ENCODE measurements at regions of chr14 and their contacts with region 1.

Region 1: DNA sequence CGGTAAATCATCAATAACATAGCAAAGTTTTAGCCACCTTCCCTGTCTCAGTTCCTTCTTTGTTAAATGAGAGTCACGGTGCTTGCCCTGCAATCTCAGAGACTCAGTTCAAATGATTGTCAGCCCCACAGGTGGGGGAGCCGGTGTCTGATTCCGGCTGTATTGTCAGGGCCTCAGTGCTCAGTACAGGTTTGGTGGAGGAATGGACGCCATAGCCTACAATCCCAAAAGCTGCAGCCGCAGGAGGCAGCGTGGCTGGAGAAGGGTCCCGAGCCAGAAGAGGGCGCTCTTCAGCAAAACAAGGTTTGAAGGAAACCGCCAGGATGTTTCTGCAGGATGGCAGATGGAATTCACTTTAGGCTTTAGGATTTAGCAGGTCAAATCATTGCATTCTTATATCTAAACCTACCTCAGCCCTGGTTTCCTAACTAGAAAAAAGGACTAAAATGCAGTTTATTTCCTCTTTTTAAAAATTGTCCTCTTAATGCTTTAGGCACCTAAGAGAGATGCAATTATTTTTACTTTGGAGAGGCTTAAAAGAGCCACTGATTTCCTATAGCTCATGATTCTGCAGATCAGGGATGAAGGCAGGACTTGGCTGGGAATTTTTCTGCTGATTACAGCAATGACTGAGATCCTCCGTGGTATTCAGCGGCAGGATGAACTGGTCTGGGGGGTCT is 29.2 kb downstream of the FOS start:
- DNase-seq: peak; percentile 88 to 94 (median 92)
- ATAC-seq: peak; percentile 43 to 49
- H3K4me3 ChIP-seq: no peak overlapping the region
- H3K27ac ChIP-seq: no peak overlapping the region
- H3K4me1 ChIP-seq: peaks cover 4% of the 10 kb centered on the region
- H3K27me3 ChIP-seq: no peaks in the 10 kb centered on the region

Region 2: DNA sequence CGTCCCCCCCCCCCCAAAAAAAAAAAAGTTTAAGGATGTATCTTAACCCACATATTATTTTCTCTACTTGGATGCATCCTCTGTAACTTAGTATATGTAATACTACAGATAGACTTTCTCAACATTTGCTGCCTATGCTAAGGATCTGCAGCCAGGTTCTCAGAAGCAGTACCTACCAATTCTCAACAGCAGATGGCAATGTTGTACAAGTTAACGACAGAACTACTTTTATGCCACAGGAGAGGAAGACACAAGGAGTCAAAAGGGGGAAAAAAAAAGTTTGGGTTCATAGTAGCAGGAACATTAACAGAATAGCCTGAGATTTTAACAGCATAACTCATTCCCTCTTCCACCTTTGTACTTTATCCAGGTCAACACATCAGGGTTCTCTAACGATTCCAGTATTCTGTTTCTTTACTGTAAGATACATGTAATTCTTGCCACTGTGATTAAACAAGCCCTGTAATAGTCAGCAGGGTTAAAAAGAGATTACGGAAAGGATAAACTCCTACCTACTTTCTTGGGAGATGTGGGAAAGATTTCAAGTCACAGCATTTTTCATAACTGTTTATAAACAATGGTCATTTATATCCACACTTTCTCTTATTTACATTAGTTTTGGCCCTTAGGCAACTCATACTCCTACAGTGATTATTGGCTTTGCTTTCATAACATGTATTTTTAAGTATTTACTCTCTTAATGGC is 175.3 kb before region 1 on chr14:
- intact Hi-C with region 1: loop called in 1 of 4 experiments (anchors 5 kb)
- DNase-seq: no peak
- ATAC-seq: peak; percentile 68 to 78
- H3K4me3 ChIP-seq: no peak overlapping the region
- H3K27ac ChIP-seq: no peak overlapping the region
- H3K4me1 ChIP-seq: peaks cover 2% of the 10 kb centered on the region
- H3K27me3 ChIP-seq: no peaks in the 10 kb centered on the region

Region 3: DNA sequence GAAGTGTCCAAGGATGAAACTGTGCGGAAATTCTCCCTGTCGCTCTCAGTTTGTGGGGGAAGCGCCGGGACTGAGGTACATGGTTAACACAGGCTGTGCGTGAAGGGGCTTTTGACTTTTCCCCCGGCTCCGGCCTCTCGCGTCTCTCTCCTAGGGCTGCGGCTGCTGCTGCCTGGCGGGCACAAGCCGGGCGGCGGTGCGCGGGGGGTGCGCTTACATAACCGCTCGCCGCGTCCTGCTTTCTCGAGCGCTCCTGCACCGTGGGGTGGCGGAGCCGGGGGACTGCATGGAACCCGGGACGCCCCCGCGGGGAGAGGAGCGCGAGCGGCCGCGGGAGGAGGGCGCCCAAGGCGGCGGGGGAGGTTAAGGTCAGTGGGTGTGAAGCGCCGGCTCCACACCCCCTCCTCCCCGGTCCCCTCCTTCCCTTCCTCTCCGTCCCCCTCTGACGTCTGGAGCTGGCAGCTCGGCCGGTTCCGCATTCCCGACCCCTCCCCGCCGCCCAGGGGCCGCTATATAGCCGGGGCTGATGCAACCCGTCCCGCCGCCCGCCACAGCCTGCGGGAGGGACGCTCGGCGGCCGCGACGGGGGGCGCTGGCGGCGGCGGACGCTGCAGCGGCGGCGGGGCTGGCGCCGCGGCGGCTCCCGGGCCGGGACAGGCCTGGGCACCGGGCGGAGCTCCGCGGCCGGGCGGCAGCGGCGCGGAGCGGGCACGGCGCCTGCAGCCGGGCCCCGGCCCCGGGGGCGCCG is 119.8 kb after region 1 on chr14 and contains the start of gene JDP2:
- intact Hi-C with region 1: loop called in 3 of 4 experiments (anchors 5 to 10 kb)
- DNase-seq: peak; percentile 97 to 99 (median 99)
- ATAC-seq: peak; percentile 93 to 94
- H3K4me3 ChIP-seq: peak within 1 kb of the TSS; percentile 95
- H3K27ac ChIP-seq: peak within 1 kb of the TSS; percentile 92
- H3K4me1 ChIP-seq: peaks cover 11% of the 10 kb centered on the region
- H3K27me3 ChIP-seq: no peaks in the 10 kb centered on the region
- total RNA-seq, gene JDP2: 28.3 to 42.2 (median 39.4) TPM

Region 4: GRCh38 chr14:75459099-75459741 is 151.4 kb after region 1 on chr14:
- intact Hi-C with region 1: no loop called
- DNase-seq: peak; percentile 78 to 89 (median 87)
- ATAC-seq: peak; percentile 85 to 92
- H3K4me3 ChIP-seq: no peak overlapping the region
- H3K27ac ChIP-seq: peak overlapping the region; percentile 26
- H3K4me1 ChIP-seq: peaks cover 29% of the 10 kb centered on the region
- H3K27me3 ChIP-seq: no peaks in the 10 kb centered on the region

Region 5: DNA sequence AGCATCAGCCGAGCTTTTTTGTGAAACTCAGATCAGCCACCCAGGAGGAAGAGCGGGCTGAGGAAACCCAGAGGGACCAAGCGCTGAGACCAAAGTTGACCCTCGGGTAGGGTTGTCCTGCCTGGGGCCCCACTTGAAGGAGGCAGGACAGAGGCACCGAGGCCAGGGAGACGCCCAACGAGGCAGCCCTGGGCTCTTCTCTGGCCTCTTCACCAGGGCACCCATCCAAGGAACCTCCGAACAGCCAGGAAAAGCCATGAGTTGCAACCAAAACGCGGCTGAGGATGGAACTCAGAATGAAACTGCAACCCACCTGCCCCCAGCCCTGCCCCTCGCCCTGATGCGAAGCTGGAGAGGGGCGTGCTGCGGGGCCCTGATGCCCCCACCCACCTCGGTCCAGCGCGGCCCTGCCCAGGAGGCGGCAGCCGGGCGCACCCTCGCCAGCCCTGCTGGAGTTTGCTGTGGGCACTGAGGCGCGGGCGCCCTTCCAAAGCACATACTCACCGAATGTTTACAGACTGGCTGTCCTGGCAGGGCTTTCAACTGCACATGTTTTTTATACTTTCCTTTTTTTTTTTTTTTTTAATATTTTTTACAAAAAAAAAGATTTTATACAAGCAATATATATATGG is 161.9 kb after region 1 on chr14:
- intact Hi-C with region 1: loop called in 1 of 4 experiments (anchors 5 kb)
- DNase-seq: peak in 2 of 3 donors; percentile 33 to 64
- ATAC-seq: peak in 1 of 2 donors; percentile 19
- H3K4me3 ChIP-seq: no peak overlapping the region
- H3K27ac ChIP-seq: no peak overlapping the region
- H3K4me1 ChIP-seq: peaks cover 2% of the 10 kb centered on the region
- H3K27me3 ChIP-seq: no peaks in the 10 kb centered on the region

Region 6: DNA sequence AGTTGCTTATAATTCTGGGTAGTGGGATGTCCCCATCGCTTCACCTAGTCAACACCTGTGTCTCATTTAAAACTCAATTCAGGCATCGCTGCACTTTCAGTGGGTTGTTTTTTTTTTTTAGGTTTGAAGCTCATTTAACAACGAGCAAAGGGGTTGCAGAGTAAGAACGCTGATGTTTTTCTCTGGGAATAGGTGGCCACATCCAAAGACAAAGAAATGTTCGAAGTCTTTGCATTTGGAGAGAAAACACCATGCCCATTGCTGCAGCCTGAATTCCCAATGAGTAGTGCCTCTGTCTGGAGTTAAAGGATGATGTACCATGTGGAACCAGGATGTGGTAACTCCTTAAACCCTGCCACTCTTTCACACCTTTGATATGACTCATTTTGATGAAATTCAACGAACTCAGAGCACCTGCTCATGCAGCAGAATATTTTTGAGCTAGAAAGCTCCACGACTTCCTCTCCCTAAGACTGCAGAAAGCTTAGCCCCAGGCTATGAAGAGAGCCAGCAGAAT is 179.4 kb after region 1 on chr14:
- intact Hi-C with region 1: loop called (anchors 1 to 5 kb)
- DNase-seq: no peak
- ATAC-seq: no peak
- H3K4me3 ChIP-seq: no peak overlapping the region
- H3K27ac ChIP-seq: no peak overlapping the region
- H3K4me1 ChIP-seq: no peaks in the 10 kb centered on the region
- H3K27me3 ChIP-seq: no peaks in the 10 kb centered on the region

Region 7: DNA sequence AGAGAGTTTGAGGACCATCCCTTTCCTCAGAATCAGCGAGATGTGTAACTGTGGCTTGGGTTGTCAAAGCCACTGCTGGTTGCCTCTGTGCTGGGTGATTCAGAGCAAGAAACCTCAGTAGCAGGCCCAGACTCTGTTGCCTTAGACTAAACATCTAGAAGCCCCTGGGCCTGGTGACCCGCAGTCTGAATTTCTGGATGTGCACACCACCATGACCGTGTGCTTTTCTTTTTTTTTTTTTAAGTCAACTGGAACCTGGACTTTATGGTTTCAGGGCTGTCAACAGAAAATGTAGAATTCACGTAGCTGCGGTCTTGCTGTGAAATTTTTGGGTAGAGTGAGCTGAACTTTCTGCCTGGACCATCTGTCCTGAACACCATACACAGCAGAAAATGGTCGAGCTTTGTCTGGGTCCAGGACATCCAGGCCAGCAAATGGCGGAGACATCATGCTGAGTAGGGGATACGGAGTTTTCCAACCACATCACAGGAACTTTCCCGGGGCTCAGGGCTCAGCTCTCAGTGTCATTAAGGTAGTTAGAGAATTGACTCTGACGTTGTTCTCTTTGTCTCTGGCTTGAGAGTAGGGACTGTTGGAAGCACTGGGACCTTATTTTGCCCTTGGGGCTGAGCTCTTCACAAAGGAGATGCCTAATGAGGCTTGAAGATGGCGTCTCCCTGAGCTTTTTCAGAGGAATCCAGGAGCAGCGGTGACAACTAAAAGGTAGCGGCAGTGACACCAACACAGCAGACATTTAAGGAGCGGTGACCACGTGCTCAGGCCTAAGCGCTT is 191.4 kb after region 1 on chr14:
- intact Hi-C with region 1: no loop called
- DNase-seq: no peak
- ATAC-seq: no peak
- H3K4me3 ChIP-seq: no peak overlapping the region
- H3K27ac ChIP-seq: no peak overlapping the region
- H3K4me1 ChIP-seq: no peaks in the 10 kb centered on the region
- H3K27me3 ChIP-seq: no peaks in the 10 kb centered on the region

Region 8: GRCh38 chr14:75560962-75561432 is 253.2 kb after region 1 on chr14:
- intact Hi-C with region 1: loop called in 1 of 4 experiments (anchors 10 kb)
- DNase-seq: peak; percentile 63 to 85 (median 77)
- ATAC-seq: peak; percentile 80 to 83
- H3K4me3 ChIP-seq: no peak overlapping the region
- H3K27ac ChIP-seq: no peak overlapping the region
- H3K4me1 ChIP-seq: no peaks in the 10 kb centered on the region
- H3K27me3 ChIP-seq: no peaks in the 10 kb centered on the region